ENCODE measurements at regions of chr4 and their contacts with region 1.

Region 1: DNA sequence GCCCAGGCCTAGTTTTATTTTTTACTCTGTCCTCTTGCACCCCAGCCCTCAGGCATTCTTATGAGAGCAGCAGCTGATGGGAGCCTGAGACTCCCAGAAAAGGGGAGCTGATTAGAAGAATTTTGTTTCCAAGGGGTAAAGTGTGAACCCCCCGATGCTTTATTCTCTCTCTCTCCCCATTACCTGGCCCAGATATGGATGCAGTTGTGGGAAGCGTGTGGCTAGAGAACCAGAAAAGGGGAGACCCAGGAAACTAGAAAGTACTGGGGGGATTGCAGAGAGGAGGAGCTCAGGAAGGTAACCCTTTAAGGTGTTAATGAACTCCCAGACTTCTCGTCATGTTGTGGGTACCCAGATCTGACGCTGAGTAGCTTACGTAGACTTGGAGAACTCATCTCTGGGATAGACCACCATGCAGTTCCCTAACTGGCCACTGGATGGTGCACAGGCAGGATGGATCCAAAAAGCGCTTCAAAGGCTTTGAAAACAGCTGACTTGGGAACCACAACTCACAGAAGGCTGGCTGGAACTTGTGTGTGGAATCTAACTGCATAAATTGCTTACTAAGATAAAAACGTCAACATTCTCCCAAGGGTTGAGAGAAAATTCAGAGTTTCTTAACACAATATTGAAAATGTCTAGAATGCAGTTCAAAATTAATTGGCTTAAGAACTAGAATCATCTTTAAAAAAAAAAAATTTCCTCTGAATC is 64.7 kb downstream of the TBC1D14 start:
- DNase-seq: peak; percentile 66
- ATAC-seq: peak; percentile 95
- H3K4me3 Mint-ChIP-seq: no peak overlapping the region
- H3K27ac Mint-ChIP-seq: no peak overlapping the region
- H3K4me1 Mint-ChIP-seq: peaks cover 32% of the 10 kb centered on the region
- H3K27me3 Mint-ChIP-seq: no peaks in the 10 kb centered on the region
- CTCF ChIP-seq: peak; percentile 39

Region 2: GRCh38 chr4:6437826-6438238 is 536.5 kb before region 1 on chr4:
- CTCF ChIA-PET with region 1: no interaction called
- POLR2A ChIA-PET with region 1: no interaction called
- intact Hi-C with region 1: no loop called
- DNase-seq: no peak
- ATAC-seq: no peak
- H3K4me3 Mint-ChIP-seq: no peak overlapping the region
- H3K27ac Mint-ChIP-seq: no peak overlapping the region
- H3K4me1 Mint-ChIP-seq: no peaks in the 10 kb centered on the region
- H3K27me3 Mint-ChIP-seq: peaks cover 4% of the 10 kb centered on the region
- CTCF ChIP-seq: no peak

Region 3: DNA sequence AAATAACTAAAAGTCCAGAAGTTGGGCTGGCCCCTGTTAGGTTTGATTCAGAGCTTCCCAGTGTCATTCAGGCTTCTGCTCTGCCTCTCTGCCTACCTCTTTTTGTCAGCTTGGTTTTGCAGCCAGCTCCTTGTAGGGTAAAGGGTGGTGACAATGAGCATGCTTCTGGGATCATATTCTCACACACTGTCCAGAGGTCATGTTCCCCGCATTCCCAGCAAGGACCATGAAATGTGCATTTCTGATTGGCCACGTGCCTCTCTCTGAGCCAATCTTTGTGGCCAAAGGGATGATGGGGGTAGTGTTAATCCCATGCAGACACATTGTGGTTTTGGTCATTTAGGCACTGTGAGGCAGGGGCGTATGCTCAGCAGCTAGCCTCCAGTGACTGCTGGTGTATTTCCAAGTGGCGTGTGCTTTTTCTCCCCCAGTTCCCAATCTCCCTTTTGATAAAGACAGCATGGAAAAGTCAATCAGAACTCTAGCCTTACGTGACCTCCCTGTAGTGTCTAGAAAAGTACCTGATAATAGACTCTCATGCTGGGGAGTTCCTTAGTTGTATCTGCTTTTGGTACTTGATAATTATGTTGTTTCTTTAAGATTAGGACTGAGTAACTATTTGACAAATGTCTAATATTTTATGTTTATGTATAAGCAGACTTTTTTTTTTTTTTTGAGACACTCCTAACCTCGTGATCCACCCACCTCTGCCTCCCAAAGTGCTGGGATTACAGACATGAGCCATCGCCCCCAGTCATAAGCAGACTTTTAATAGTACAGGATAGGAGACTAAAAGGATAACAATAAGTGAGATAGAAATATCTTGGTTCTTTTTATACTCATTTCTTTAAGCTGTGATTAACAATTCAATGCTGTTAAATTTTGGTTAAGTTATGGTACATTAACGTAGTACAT is 134.0 kb before region 1 on chr4:
- CTCF ChIA-PET with region 1: no interaction called
- POLR2A ChIA-PET with region 1: no interaction called
- intact Hi-C with region 1: no loop called
- DNase-seq: no peak
- ATAC-seq: no peak
- H3K4me3 Mint-ChIP-seq: no peak overlapping the region
- H3K27ac Mint-ChIP-seq: no peak overlapping the region
- H3K4me1 Mint-ChIP-seq: no peaks in the 10 kb centered on the region
- H3K27me3 Mint-ChIP-seq: no peaks in the 10 kb centered on the region
- CTCF ChIP-seq: no peak

Region 4: DNA sequence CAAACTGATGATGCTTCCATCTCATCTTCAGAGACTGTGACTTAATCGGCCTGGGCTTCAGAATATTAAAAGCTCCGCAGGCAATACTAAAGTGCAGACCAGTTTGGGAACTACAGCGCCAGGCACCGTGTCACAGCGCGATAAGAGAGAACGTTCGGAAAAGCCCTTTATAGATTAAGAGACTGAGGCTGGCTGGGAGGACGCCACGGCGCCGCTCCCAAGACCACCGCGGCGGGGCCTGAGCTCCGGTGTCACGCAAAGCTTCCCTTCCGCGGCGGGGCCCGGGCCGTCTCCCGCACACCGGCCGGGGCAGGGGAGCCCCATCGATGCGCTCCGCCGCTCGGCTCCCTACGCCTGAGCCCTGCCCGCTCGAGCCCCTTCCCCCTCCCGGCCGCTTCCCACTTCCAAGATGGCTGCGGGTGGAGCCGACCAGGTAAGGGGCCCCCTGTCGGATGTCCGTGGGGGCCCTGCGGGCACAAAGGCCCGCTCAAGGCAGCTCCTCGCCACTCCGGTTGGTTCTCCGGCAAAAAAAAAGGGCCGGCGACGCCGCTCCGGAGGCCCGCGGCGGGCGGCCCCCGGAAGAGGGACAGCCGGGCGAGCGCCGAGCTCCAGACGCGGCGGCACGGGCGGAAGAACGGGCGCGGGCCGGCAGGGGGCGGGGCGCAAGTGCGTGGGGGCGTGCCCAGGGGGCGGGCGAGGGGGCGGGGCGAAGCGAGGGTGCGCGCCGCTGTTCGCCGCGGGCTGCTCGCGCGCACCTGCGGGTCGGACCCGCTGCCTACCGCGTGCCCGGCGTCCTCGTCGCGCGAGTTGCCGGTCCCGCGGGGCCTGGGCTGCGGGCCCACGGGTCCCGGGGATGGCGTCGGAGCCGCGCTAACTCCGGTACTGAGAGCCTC is 65.0 kb before region 1 on chr4 and contains the start of gene TBC1D14:
- CTCF ChIA-PET with region 1: interaction called, 4 read pairs
- POLR2A ChIA-PET with region 1: interaction called, 11 read pairs
- intact Hi-C with region 1: no loop called
- DNase-seq: peak; percentile 88
- ATAC-seq: peak; percentile 89
- H3K4me3 Mint-ChIP-seq: peak within 1 kb of the TSS; percentile 87
- H3K27ac Mint-ChIP-seq: peak within 1 kb of the TSS; percentile 86
- H3K4me1 Mint-ChIP-seq: peaks cover 43% of the 10 kb centered on the region
- H3K27me3 Mint-ChIP-seq: peaks cover 5% of the 10 kb centered on the region
- CTCF ChIP-seq: no peak
- total RNA-seq, gene TBC1D14: 35.1 and 35.2 TPM in 2 replicates

Region 5: GRCh38 chr4:7013175-7013574 is 38.9 kb after region 1 on chr4:
- CTCF ChIA-PET with region 1: interaction called, 5 read pairs
- POLR2A ChIA-PET with region 1: no interaction called
- intact Hi-C with region 1: loop called (anchors 1 kb)
- DNase-seq: no peak
- ATAC-seq: peak; percentile 60
- H3K4me3 Mint-ChIP-seq: no peak overlapping the region
- H3K27ac Mint-ChIP-seq: peak overlapping the region; percentile 67
- H3K4me1 Mint-ChIP-seq: peaks cover 20% of the 10 kb centered on the region
- H3K27me3 Mint-ChIP-seq: no peaks in the 10 kb centered on the region
- CTCF ChIP-seq: no peak